K562 (cell line): ENCODE measurements at regions of chr1 and their contacts with region 1.

Region 1: DNA sequence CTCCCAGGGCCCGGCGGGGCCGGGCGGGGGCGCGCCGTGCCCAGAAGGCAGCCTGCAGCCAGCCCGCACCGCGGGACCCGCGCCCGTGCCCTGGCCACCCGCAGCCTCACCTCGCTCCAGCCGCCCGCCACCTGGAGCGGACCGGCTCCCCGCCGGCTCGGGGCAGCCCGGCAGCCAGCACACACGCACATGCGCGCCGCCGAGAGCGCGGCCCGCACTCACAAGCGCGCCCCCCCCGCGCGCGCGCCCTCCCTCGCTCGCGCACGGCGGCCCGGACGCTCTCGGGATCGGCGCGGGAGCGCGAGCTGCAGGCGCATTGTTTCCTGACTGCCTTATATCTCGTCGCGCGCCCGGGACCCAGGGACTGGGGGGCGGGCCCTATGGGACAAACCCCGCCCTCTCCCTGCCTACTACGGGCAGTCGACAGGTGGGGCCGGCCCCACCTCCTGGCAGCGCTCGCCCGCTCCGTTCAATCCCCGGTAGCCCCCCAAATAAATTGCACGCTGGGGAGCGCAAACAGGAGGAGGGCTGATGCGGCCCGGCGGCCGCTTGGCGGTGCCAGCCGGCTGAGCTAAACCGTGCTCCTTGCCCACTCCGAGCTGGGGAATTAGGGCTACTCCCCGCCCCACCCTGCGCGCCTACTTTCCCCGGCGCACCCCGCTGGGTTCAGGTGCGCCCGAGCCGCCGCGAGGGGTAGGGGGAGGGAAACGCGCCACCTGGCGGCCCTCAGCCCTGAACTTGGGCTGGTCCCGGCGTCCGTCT is at the start of gene MYCL:
- DNase-seq: peak; percentile 92 to 94 (median 93)
- ATAC-seq: peak; percentile 78
- H3K4me3 ChIP-seq: peak within 1 kb of the TSS; percentile 80
- H3K27ac ChIP-seq: peak within 1 kb of the TSS; percentile 64
- H3K4me1 ChIP-seq: peaks cover 30 to 35% of the 10 kb centered on the region in 2 experiments; a peak in 4 of 5 replicates
- H3K27me3 ChIP-seq: peaks cover 3 to 14% of the 10 kb centered on the region in 2 experiments
- CTCF ChIP-seq: peak; percentile 83 to 92 (median 89)
- EP300 ChIP-seq: no peak
- POLR2A ChIP-seq: no peak
- RAD21 ChIP-seq: peak; percentile 84 to 89
- polyA plus RNA-seq, gene MYCL: 3.5 to 4.0 TPM

Region 2: DNA sequence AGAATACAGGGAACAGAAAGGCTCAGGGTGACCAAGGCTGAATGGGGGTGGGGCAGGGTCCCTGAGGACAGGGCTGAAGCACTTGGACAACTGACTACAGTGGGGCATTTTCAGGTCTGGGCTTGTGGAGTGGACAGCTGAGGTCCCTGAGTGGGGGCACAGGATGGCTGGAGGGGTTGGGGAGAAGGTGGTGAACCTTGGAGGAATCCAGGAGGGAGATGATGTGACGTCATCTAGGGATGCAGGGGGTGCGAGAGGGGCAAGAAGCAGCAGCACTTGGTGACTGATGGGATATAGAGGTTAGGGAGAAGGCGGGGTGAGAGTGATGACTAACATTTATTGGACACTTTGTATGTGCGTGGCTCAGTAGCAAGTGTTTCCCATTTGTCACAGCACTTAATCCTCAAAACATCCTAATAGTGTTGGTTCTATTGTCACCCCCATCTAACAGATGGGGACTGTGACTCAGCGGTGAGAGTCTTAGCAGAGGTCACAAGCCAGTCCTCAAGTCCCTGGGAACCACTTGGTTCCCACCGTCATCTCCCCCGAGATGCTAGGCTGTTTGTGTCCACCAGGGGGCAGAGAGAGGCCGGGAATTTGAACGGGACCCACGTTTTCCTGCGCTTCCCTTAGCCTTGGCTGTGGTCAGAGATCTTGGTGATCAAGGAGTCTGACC is 85.3 kb before region 1 on chr1:
- CTCF ChIA-PET with region 1: interaction called, 43 read pairs
- POLR2A ChIA-PET with region 1: interaction called, 3 read pairs
- in situ Hi-C with region 1: loop called (anchors 5 kb)
- intact Hi-C with region 1: loop called (anchors 1 kb)
- DNase-seq: peak; percentile 84 to 88 (median 86)
- ATAC-seq: peak; percentile 92
- H3K4me3 ChIP-seq: no peak overlapping the region
- H3K27ac ChIP-seq: no peak overlapping the region
- H3K4me1 ChIP-seq: peaks cover 9 to 11% of the 10 kb centered on the region in 2 experiments; a peak in 4 of 5 replicates
- H3K27me3 ChIP-seq: peaks cover 2 to 8% of the 10 kb centered on the region in 2 experiments; a peak in 2 of 5 replicates
- CTCF ChIP-seq: peak; percentile 87 to 94 (median 91)
- EP300 ChIP-seq: no peak
- POLR2A ChIP-seq: no peak
- RAD21 ChIP-seq: peak; percentile 95 to 99

Region 3: GRCh38 chr1:39829791-39830533 is 71.9 kb before region 1 on chr1:
- CTCF ChIA-PET with region 1: no interaction called
- POLR2A ChIA-PET with region 1: interaction called, 7 read pairs
- in situ Hi-C with region 1: no loop called
- intact Hi-C with region 1: loop called (anchors 5 kb)
- DNase-seq: peak; percentile 36 to 51 (median 39)
- ATAC-seq: peak; percentile 37
- H3K4me3 ChIP-seq: no peak overlapping the region
- H3K27ac ChIP-seq: no peak overlapping the region
- H3K4me1 ChIP-seq: peaks cover 11 to 33% of the 10 kb centered on the region in 2 experiments
- H3K27me3 ChIP-seq: no peaks in the 10 kb centered on the region
- CTCF ChIP-seq: no peak
- EP300 ChIP-seq: no peak
- POLR2A ChIP-seq: no peak
- RAD21 ChIP-seq: no peak

Region 4: DNA sequence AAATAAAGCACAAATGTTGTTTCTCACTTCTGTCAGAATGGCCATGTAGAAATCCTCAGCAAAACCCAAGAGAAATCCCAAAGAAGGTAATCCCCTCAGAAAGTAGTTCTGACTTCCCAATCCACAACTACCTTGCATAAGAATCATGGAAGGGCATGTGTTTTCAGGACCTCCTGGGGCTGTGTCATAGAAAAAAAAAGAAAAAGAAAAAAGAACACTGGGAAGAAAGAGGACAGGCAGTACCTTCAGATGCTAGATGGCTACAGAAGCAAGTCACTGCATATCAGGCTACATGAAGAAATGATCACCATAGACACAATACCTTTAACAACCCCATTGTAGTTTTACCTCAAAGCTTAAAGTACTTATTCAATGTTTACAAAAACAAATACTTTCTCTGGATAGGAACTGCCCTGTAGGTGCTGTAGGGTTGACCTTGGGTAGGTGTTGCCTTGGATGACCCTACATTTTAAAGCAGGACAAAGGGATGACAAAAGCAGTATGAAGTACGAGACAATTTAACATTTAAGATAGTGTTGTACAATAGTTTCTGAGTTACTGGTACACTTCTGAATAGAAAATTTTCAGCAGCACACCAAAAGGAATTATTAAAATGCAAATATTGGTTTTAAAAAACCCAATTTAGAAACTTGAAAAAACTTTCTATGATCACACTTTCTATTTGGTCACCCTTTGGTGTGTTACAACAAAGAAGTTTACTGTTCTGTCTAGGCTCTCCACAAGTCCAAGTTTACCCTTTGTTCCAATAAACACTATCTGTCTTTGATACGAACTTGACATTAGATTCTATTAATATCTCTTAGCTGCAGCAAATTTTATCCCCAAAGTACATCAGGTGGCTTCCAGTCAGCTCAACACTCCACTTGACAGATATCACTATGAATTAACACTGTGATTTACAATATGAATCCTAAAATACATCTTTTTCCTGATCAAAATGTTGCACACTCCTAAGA is 23.6 kb before region 1 on chr1:
- CTCF ChIA-PET with region 1: no interaction called
- POLR2A ChIA-PET with region 1: interaction called, 92 read pairs
- in situ Hi-C with region 1: no loop called
- intact Hi-C with region 1: no loop called
- DNase-seq: no peak
- ATAC-seq: no peak
- H3K4me3 ChIP-seq: no peak overlapping the region
- H3K27ac ChIP-seq: no peak overlapping the region
- H3K4me1 ChIP-seq: peaks cover 13 to 21% of the 10 kb centered on the region in 2 experiments; a peak in 4 of 5 replicates
- H3K27me3 ChIP-seq: no peaks in the 10 kb centered on the region
- CTCF ChIP-seq: no peak
- EP300 ChIP-seq: no peak
- POLR2A ChIP-seq: no peak
- RAD21 ChIP-seq: no peak

Region 5: DNA sequence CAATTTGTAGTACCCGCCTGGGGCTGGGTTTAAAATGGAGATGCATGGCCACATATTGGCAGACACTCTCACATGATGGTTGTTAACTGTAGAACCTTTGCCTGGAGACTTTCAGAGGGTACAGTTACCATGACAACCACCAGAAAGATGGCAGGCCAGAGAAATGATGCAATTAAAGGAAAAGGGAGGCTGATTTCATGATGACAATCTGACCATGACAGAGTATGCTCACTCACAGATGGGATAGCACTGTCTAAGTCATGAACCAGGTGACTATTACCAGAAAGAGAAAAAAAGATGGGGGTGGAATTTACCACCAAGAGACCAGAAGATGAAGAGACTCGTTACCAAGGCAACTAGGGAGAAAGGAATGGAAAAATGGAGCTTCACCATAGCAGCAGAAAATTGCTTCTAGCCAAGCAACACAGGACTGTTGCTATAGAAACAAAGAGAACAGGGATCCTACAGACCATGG is 15.1 kb before region 1 on chr1:
- CTCF ChIA-PET with region 1: no interaction called
- POLR2A ChIA-PET with region 1: interaction called, 92 read pairs
- in situ Hi-C with region 1: no loop called
- intact Hi-C with region 1: no loop called
- DNase-seq: no peak
- ATAC-seq: no peak; the same call in 2 of the 3 replicates
- H3K4me3 ChIP-seq: no peak overlapping the region
- H3K27ac ChIP-seq: no peak overlapping the region
- H3K4me1 ChIP-seq: peaks cover 19 to 26% of the 10 kb centered on the region in 2 experiments
- H3K27me3 ChIP-seq: no peaks in the 10 kb centered on the region
- CTCF ChIP-seq: no peak
- EP300 ChIP-seq: peak; percentile 73
- POLR2A ChIP-seq: no peak
- RAD21 ChIP-seq: no peak

Region 6: DNA sequence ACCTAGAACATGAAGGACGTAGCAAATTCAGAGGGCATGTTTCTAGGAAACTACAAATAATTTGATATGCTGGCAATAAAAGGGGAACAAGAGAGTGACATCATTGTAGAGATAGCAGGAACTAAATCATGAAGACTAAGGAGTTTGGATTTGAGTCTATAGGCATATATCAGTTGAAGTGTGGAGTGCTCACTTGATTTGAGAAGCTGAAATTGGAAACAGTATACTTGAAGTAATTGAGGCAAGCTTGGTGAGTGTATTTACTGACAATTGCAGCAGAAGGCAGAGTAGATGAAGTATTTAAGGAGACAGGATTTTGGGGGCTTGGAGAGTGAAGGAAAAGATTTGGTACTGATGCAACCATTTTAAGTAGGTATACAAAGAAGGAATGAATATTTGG is 339.5 kb after region 1 on chr1:
- CTCF ChIA-PET with region 1: no interaction called
- POLR2A ChIA-PET with region 1: no interaction called
- in situ Hi-C with region 1: no loop called
- intact Hi-C with region 1: no loop called
- DNase-seq: no peak
- ATAC-seq: no peak
- H3K4me3 ChIP-seq: no peak overlapping the region
- H3K27ac ChIP-seq: no peak overlapping the region
- H3K4me1 ChIP-seq: 0 out of 5 replicates have a peak, but pooled peaks cover 0 to 3% of the 10 kb centered on the region in 2 experiments
- H3K27me3 ChIP-seq: no peaks in the 10 kb centered on the region
- CTCF ChIP-seq: no peak
- EP300 ChIP-seq: no peak
- POLR2A ChIP-seq: peak; percentile 70
- RAD21 ChIP-seq: no peak